ENCODE measurements at regions of chr11 and their contacts with region 1.

Region 1: GRCh38 chr11:10307442-10308207 is 2.8 kb downstream of the ADM start:
- DNase-seq: peak; percentile 83 to 87
- H3K4me3 ChIP-seq: peak overlapping the region; percentile 87
- H3K27ac ChIP-seq: peak overlapping the region; percentile 98
- H3K4me1 ChIP-seq: peaks cover 25% of the 10 kb centered on the region
- H3K27me3 ChIP-seq: no peaks in the 10 kb centered on the region
- CTCF ChIP-seq: peak; percentile 95

Region 2: DNA sequence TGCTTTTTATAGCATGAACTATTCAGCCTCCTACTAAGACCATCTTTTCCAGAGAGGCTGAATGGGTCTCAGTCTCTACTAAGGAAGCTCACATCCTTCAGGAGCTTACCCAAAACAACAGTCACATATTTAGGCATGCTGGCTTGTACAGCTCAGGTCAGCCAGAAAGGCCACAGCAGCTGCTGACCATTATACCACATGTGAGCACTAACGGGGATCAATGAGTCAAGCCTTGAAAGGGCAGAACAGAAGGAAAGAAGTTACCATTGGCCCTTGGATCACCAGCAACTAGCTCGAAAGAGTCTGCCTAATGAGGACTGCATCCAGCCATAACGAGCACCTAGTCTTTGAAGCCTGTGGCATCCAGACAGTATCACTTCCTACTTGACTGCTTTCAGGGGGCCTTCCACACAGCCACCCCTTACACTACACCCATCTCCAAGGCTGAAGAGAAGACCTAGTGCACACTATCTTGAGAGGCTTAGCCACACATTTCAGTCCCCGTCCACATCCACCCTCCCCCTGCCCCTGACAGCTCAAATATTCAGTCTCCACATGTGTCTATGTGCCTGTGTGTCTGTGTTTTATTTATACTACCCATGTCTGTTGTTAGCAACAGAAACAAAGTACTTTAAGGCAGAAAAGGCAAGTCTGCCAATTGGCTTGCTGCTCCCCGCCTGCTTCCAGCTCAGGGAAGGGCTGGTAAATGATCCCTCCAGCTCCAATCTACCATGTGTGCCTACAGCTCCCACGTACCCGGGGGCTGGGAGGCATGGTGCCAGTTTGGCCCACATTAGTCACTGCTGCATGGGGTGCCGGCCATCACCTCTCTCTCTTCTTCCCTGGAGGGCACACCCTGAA is 1529.5 kb before region 1 on chr11:
- CTCF ChIA-PET with region 1: no interaction called
- POLR2A ChIA-PET with region 1: no interaction called
- intact Hi-C with region 1: no loop called
- DNase-seq: no peak
- H3K4me3 ChIP-seq: no peak overlapping the region
- H3K27ac ChIP-seq: no peak overlapping the region
- H3K4me1 ChIP-seq: no peaks in the 10 kb centered on the region
- H3K27me3 ChIP-seq: no peaks in the 10 kb centered on the region
- CTCF ChIP-seq: no peak

Region 3: GRCh38 chr11:9861860-9862725 is 445.5 kb before region 1 on chr11:
- CTCF ChIA-PET with region 1: no interaction called
- POLR2A ChIA-PET with region 1: no interaction called
- intact Hi-C with region 1: loop called (anchors 1 kb)
- DNase-seq: peak; percentile 37 to 41
- H3K4me3 ChIP-seq: no peak overlapping the region
- H3K27ac ChIP-seq: no peak overlapping the region
- H3K4me1 ChIP-seq: no peaks in the 10 kb centered on the region
- H3K27me3 ChIP-seq: no peaks in the 10 kb centered on the region
- CTCF ChIP-seq: peak; percentile 66

Region 4: DNA sequence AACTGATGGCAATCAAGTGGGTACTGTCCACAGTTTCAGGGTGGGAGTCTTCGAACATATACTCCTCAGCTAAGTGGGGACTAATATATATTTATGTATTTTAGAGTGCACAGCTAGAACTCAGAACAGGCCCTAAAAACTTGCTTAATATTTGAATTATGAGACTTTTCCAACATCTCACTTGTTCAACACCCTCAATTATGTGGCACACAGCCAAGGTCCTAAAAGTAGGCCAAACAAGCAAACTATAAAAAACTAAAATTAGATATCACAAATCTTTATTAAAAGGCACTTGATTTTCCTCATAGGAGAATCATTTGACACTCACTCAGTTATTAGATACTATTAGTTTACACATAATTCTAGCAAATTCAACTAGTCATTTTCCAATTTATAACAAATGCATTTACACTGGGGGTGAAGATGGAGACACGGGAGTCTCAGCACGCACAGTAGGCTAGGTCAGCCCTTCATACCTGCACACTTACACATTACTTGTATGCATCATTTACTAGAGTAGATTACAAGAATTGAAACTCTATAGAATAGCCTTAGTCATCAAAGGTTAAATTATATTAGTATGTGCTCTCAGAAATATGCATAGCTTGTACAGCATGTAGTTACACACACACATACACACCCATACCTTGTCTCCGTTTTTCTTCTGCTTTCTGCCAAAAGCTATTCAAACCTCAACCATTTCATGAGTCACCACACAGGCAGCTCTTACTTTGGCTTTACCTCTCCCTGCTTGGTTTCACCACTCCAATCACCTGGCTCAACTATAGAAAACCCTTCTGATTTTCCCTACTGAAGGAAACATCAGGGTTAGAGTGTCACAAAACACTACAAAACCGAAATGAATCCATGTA is 185.1 kb before region 1 on chr11:
- CTCF ChIA-PET with region 1: interaction called, 12 read pairs
- POLR2A ChIA-PET with region 1: interaction called, 6 read pairs
- intact Hi-C with region 1: no loop called
- DNase-seq: peak; percentile 28 to 83
- H3K4me3 ChIP-seq: no peak overlapping the region
- H3K27ac ChIP-seq: peak overlapping the region; percentile 71
- H3K4me1 ChIP-seq: peaks cover 17% of the 10 kb centered on the region
- H3K27me3 ChIP-seq: no peaks in the 10 kb centered on the region
- CTCF ChIP-seq: no peak

Region 5: DNA sequence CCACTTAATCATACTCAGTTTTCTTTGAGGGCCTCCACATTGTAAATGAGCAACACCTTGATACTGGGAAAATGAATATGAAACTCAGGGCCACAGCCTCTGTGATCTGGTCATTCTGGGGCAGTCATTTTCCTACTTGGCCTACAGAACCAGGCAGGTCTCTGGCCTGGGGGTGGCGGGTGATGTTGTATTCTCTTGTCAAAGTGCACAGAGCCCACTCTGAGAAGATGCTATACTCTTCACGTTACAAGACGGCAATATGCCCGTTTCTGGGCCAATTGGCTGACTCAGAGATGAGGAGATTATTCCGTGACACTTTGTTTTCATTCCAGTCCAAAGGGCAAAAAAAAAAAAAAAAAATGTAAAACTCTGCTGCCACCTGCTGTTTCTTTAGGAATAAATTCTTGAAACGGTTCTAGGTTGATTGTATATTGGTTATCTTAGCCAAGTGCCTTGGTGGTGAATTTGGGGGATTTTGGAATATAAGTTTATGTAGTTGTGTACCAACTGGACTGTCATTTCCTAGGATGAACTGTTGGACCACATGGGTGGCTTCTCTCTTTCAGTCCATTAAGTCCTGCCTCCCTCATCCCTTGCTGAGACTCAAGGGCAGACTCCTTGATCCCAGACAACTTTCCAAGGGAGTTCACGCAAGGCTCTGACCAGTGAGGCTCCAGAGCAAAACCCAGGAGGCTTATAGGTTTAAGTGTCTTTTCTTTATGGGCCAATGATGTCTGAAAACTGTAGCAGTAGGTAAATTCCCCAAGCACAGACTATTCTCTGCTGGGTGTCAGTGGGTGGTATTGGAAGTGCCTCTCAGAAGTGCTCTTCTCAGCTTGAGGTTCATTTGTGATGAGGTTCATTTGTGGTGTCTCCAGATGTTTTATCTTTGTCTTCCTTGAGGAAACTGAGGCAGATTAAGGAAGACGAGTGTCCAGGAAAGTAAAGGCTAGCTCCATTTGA is 15.5 kb after region 1 on chr11:
- CTCF ChIA-PET with region 1: interaction called, 3 read pairs
- POLR2A ChIA-PET with region 1: interaction called, 5 read pairs
- intact Hi-C with region 1: loop called (anchors 2 kb)
- DNase-seq: peak; percentile 42 to 85
- H3K4me3 ChIP-seq: no peak overlapping the region; the same call in 1 of the 2 replicates
- H3K27ac ChIP-seq: peak overlapping the region; percentile 88
- H3K4me1 ChIP-seq: peaks cover 46% of the 10 kb centered on the region
- H3K27me3 ChIP-seq: no peaks in the 10 kb centered on the region
- CTCF ChIP-seq: peak; percentile 58

Region 6: GRCh38 chr11:10379022-10379421 is 71.4 kb after region 1 on chr11:
- CTCF ChIA-PET with region 1: no interaction called
- POLR2A ChIA-PET with region 1: no interaction called
- intact Hi-C with region 1: no loop called
- DNase-seq: no peak
- H3K4me3 ChIP-seq: no peak overlapping the region
- H3K27ac ChIP-seq: no peak overlapping the region
- H3K4me1 ChIP-seq: no peaks in the 10 kb centered on the region; the same call in 1 of the 2 replicates
- H3K27me3 ChIP-seq: no peaks in the 10 kb centered on the region
- CTCF ChIP-seq: no peak

Region 7: GRCh38 chr11:10405855-10406592 is 98.4 kb after region 1 on chr11:
- CTCF ChIA-PET with region 1: no interaction called
- POLR2A ChIA-PET with region 1: interaction called, 16 read pairs
- intact Hi-C with region 1: no loop called
- DNase-seq: peak; percentile 37 to 72
- H3K4me3 ChIP-seq: no peak overlapping the region
- H3K27ac ChIP-seq: peak overlapping the region; percentile 87
- H3K4me1 ChIP-seq: peaks cover 17% of the 10 kb centered on the region
- H3K27me3 ChIP-seq: no peaks in the 10 kb centered on the region
- CTCF ChIP-seq: peak; percentile 68

Region 8: GRCh38 chr11:10653926-10654810 is 346.5 kb after region 1 on chr11:
- CTCF ChIA-PET with region 1: no interaction called
- POLR2A ChIA-PET with region 1: no interaction called
- intact Hi-C with region 1: loop called (anchors 5 kb)
- DNase-seq: no peak
- H3K4me3 ChIP-seq: no peak overlapping the region
- H3K27ac ChIP-seq: peak overlapping the region; percentile 62; the same call in 1 of the 2 replicates
- H3K4me1 ChIP-seq: peaks cover 42% of the 10 kb centered on the region
- H3K27me3 ChIP-seq: no peaks in the 10 kb centered on the region
- CTCF ChIP-seq: peak; percentile 67

Measured in PC-9 (cell line).